Heart left ventricle (tissue), 16 donors: ENCODE measurements at regions of chr10 and their contacts with region 1.

Region 1: DNA sequence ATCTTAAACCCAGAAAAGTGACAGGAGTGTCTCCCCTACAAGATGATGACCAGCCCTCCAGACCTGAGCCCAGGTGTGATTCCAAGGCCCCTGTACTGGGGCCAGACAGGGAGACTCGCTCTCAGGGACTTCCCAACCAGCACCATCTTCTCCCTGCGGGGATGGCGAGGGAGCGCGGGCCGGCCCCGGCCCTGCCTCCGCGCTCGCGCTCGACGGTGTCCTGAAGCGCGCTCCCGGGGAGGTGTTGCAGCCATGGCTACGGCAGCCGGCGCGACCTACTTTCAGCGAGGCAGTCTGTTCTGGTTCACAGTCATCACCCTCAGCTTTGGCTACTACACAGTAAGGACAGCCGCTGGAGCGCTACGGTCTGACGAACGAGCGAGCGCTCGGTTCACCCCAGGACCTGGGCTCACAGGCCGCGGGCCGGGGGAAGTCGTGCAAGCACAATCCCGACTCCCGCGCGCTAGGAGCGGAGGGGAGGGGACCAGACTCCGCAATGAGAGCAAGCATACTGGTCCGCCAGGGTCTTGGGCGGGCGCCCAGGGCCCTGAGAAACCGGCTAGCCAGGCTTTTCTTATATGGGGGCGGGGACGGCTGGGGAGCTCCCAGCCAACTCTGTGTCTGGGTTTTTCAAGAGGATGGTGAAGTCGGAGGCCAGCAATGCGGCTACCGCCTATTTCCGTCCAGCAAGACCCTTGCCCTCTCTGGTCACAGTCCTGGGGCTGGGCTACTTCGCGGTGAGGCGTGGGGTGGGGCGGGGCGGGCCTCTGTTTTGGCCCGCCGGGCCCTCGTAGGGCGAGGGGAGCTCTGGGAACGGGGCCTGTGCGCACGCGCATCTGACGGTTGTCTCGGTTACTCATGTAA is at the start of gene TMEM254:
- DNase-seq: peak; percentile 93 to 96 (median 94)
- ATAC-seq: peak; percentile 97 to 98 (median 98)
- H3K4me3 ChIP-seq: peak within 1 kb of the TSS; percentile 56 to 90 (median 74)
- H3K27ac ChIP-seq: peak within 1 kb of the TSS; percentile 92 to 99 (median 95)
- H3K4me1 ChIP-seq: peaks cover 0 to 20% (median 14%) of the 10 kb centered on the region in 12 donors
- H3K27me3 ChIP-seq: no peaks in the 10 kb centered on the region
- CTCF ChIP-seq: no peak
- POLR2A ChIP-seq: no peak
- total RNA-seq, gene TMEM254: 4.7 to 13.4 (median 7.0) TPM

Region 2: GRCh38 chr10:80136081-80136571 is 57.4 kb after region 1 on chr10:
- intact Hi-C with region 1: loop called in 7 of 10 experiments (anchors 5 to 10 kb)
- DNase-seq: peak; percentile 93 to 97 (median 95)
- ATAC-seq: peak; percentile 78 to 90 (median 84)
- H3K4me3 ChIP-seq: peak overlapping the region in 5 of 12 donors; percentile 7 to 68 (median 35)
- H3K27ac ChIP-seq: peak overlapping the region; percentile 25 to 91 (median 76)
- H3K4me1 ChIP-seq: peaks cover 0 to 66% (median 30%) of the 10 kb centered on the region in 12 donors
- H3K27me3 ChIP-seq: peaks cover 0 to 19% (median 0%) of the 10 kb centered on the region in 9 donors
- CTCF ChIP-seq: no peak
- POLR2A ChIP-seq: no peak